Calu3 (cell line): ENCODE measurements at regions of chr7 and their contacts with region 1.

Region 1: DNA sequence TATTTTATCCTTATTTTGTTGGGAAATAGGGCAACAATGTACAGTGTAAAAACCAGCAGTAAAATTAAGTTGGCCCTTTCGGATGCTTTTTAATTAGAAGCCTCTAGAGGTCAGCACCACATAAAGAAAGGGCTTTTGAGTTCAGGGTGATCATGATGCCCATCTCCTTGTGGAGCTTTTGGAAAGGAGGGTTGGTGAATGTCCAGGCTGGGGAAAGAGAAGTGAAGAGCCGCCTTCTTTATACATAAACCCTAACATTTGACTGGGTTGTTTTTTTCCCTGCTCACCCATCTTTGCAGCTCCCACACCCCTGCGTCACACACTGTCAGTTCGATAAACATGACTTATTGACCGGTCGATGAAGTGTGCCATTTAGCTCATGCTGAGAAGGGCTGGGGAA is 29.8 kb downstream of the MTURN start:
- DNase-seq: peak; percentile 56
- H3K4me3 Mint-ChIP-seq: no peak overlapping the region
- H3K27ac Mint-ChIP-seq: peak overlapping the region; percentile 16
- H3K4me1 Mint-ChIP-seq: peaks cover 36% of the 10 kb centered on the region
- H3K27me3 Mint-ChIP-seq: peaks cover 18% of the 10 kb centered on the region
- CTCF ChIP-seq: peak; percentile 72

Region 2: DNA sequence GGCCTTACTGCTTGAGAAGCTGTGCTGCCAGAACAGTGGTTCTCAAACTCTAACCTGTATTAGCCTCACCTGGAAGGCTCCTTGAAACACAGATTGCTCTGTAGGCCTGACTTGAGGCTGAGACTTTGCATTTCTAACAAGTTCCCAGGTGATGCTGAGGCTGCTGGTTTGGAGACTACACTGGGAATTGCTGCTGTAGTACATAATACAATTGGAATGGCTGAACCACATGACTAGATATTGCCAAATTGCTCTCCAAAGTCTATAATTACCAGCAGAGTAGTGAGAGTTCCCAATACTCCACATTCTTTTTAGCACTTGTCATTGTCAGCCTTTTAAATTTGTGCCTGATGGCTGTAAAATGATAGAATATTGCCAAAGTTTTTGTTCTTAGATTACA is 96.5 kb before region 1 on chr7:
- CTCF ChIA-PET with region 1: no interaction called
- intact Hi-C with region 1: no loop called
- DNase-seq: no peak
- H3K4me3 Mint-ChIP-seq: no peak overlapping the region
- H3K27ac Mint-ChIP-seq: no peak overlapping the region
- H3K4me1 Mint-ChIP-seq: no peaks in the 10 kb centered on the region
- H3K27me3 Mint-ChIP-seq: no peaks in the 10 kb centered on the region
- CTCF ChIP-seq: no peak

Region 3: DNA sequence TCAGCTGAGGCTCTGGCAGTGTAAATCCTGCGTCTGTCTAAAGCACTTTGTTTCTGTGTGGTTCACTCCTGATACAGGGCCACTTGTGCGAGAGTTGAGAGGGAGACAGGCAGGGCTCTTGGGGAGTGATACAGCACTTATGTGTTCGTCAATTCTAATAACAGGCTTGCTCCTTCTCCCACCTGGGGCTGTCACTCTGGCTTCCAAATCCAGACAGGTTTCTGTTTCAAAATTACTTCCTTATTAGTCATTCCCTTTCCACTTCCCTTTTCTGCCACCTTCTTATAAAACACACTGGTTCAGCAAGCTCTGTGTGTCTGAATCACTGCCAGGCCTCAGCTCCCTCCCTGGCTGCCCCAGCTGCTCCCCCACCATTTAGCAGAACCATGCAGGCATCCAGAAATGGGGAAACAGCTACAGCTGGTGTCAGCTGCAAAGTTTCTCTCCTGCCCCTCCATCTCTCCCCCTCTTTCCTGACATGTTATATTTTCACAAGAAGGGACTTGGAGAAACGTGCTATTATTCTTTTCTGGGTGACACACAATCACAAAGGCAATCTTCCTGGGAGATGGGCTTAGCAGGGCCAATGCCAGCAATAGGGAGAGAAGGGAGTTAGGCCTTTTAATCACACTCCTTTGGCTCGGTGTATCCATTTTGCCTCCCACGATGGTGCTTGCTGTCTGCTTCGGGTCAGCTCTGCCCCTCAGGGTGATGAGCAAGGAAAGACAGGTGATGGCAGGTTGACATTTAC is 61.5 kb after region 1 on chr7:
- CTCF ChIA-PET with region 1: interaction called, 4 read pairs
- intact Hi-C with region 1: loop called (anchors 1 kb)
- DNase-seq: peak; percentile 82
- H3K4me3 Mint-ChIP-seq: peak overlapping the region; percentile 50
- H3K27ac Mint-ChIP-seq: peak overlapping the region; percentile 87
- H3K4me1 Mint-ChIP-seq: peaks cover 36% of the 10 kb centered on the region
- H3K27me3 Mint-ChIP-seq: peaks cover 2% of the 10 kb centered on the region
- CTCF ChIP-seq: no peak

Region 4: DNA sequence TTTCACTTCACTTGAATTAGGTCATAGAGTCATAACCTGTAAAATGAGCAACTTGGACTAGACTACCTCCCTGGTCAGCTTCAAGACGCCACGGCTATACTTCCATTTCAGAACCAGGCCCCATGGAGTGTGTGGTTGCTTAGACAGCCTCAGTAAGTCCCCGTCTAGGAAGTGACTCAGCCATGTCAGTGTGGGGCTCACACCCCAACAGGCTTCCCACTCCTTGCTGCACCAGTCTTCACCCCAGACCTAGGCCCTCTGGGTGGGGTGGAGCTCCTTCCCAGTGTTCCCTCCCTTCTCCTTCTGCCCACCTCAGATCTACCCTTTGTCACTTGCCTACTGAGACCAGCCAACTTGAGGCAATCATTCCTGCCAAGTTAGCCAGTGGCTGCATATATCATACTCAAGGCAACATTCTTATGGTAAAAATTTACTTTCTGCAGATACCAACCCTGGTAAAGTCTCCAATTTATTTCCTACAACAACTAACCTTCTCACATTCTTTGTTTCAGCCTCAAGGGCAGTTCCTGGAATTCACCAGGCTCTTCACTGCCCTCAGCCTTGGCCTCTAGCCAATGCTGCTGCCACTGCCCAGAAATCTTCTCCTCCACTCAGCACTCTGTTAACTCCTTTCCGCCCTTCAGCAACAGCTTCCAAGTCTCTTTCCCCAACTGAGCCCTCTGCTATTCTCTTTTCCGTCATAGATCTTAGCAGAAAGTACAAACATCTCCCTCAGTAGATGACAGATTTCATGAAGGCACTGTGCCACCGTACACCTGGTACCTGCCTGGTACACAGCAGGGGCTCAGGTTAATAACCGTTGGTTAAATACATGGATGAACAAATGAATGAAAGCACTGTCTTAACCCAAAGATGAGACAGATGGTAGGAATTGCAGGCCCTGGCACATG is 88.6 kb after region 1 on chr7:
- CTCF ChIA-PET with region 1: interaction called, 7 read pairs
- intact Hi-C with region 1: loop called (anchors 10 kb)
- DNase-seq: peak; percentile 73
- H3K4me3 Mint-ChIP-seq: peak overlapping the region; percentile 3
- H3K27ac Mint-ChIP-seq: peak overlapping the region; percentile 9
- H3K4me1 Mint-ChIP-seq: peaks cover 51% of the 10 kb centered on the region
- H3K27me3 Mint-ChIP-seq: peaks cover 8% of the 10 kb centered on the region
- CTCF ChIP-seq: no peak

Region 5: GRCh38 chr7:30276203-30276900 is 111.8 kb after region 1 on chr7:
- CTCF ChIA-PET with region 1: interaction called, 8 read pairs
- intact Hi-C with region 1: loop called (anchors 5 kb)
- DNase-seq: peak; percentile 69
- H3K4me3 Mint-ChIP-seq: no peak overlapping the region
- H3K27ac Mint-ChIP-seq: no peak overlapping the region
- H3K4me1 Mint-ChIP-seq: peaks cover 15% of the 10 kb centered on the region
- H3K27me3 Mint-ChIP-seq: no peaks in the 10 kb centered on the region
- CTCF ChIP-seq: peak; percentile 83

Region 6: DNA sequence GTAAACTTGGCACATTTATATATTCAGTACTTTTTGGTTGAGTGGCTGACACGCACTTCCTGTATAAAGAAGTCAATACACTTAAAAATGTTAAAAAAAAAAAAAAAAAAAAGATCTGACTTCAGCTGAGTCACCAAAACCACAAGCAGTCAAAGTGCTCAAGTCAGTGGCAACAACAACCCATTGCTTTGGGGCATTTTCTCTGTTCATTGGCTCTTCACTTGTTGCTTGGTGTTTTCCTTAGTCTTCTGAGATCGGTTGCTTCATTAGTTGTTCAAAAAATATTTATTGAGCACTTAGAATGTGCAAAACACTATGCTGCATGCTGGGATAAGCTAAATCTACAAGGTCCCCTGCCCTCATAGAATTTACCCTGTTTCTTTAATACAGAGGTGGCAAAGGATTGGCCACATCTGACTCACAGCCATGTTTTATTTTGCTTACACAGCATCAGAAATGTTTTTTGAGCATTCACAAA is 183.6 kb after region 1 on chr7:
- CTCF ChIA-PET with region 1: interaction called, 3 read pairs
- intact Hi-C with region 1: loop called (anchors 1 kb)
- DNase-seq: peak; percentile 50
- H3K4me3 Mint-ChIP-seq: no peak overlapping the region
- H3K27ac Mint-ChIP-seq: peak overlapping the region; percentile 44
- H3K4me1 Mint-ChIP-seq: peaks cover 20% of the 10 kb centered on the region
- H3K27me3 Mint-ChIP-seq: no peaks in the 10 kb centered on the region
- CTCF ChIP-seq: no peak

Region 7: DNA sequence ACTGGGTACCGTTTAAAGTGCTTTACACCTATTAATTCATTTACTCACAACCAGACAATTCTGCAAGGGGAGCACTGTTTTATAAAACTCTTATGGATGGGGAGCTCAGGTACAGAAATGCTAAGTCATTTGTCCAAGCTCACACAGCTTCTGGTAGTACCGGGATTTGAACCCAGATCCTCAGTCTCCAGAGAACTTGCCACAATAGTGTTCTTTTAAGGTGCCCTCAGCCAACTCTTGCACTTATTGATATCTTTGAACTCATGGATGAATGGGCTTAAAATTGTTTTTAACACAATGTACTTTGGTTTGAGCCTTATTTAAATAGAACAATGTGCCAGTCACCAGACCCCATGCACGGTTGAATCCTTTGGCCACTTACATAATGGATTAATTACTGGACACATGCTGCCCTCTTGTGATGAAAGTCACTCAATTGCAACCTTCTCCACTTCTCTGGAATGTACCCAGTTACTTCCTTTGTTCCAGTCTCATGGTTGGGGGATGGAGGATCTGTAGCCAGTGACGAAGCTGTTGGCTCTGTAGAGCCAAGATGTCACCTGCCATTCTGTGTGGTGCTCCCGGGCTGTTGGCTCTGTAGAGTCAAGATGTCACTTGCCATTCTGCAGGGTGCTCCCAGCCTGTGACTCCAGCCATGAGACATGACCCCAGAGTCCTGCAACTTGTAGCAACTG is 248.4 kb after region 1 on chr7:
- CTCF ChIA-PET with region 1: interaction called, 5 read pairs
- intact Hi-C with region 1: loop called (anchors 2 kb)
- DNase-seq: peak; percentile 66
- H3K4me3 Mint-ChIP-seq: no peak overlapping the region
- H3K27ac Mint-ChIP-seq: no peak overlapping the region
- H3K4me1 Mint-ChIP-seq: no peaks in the 10 kb centered on the region
- H3K27me3 Mint-ChIP-seq: no peaks in the 10 kb centered on the region
- CTCF ChIP-seq: peak; percentile 65

Region 8: DNA sequence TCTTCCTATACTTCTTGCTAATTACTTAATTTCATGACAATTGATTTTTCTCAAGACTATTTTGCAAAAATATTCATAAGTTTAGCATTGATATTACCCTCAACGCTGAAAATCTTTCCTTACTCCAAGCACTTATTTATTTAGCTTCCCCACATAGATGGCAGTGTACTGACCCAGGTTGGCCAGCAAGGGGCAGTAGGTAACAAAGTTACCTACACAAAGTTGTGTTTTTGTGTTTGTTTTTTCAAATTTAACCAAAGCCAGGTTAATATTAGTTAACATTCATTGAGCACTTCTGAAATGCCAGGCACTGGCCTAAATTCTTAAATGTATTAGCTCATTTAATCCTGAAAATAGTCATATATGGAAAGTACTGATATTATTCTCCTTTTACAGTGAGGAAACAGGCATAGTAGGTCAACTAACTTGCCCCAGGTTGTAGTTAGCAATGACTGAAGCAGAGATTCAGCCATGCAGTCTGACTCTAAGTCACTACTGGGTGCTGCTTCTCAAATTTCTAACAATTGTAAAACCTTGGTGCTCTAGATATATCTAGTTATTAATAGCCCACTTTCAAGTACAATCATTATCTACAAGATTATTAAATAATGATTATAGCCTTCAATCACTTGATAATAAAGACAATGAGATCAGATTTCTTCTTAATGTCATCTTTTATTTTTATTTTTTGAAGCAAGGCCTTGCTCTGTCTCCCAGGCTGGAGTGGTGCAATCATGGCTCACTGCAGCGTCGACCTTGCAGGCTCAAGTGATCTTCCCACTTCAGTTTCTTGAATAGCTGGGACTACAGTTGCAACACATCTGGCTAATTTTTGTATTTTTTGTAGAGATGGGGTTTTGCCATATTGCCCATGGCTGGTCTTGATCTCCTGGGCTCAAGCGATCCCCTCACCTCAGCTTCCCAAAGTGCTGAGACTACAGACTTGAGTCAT is 345.8 kb after region 1 on chr7:
- CTCF ChIA-PET with region 1: no interaction called
- intact Hi-C with region 1: no loop called
- DNase-seq: peak; percentile 63
- H3K4me3 Mint-ChIP-seq: peak overlapping the region; percentile 59
- H3K27ac Mint-ChIP-seq: peak overlapping the region; percentile 68
- H3K4me1 Mint-ChIP-seq: peaks cover 23% of the 10 kb centered on the region
- H3K27me3 Mint-ChIP-seq: no peaks in the 10 kb centered on the region
- CTCF ChIP-seq: peak; percentile 85

Region 9: GRCh38 chr7:30564243-30564892 is 399.8 kb after region 1 on chr7:
- CTCF ChIA-PET with region 1: interaction called, 14 read pairs
- intact Hi-C with region 1: loop called (anchors 5 kb)
- DNase-seq: peak; percentile 90
- H3K4me3 Mint-ChIP-seq: no peak overlapping the region
- H3K27ac Mint-ChIP-seq: peak overlapping the region; percentile 23
- H3K4me1 Mint-ChIP-seq: peaks cover 20% of the 10 kb centered on the region
- H3K27me3 Mint-ChIP-seq: no peaks in the 10 kb centered on the region
- CTCF ChIP-seq: peak; percentile 94